ENCODE measurements at regions of chr12 and their contacts with region 1.

Region 1: DNA sequence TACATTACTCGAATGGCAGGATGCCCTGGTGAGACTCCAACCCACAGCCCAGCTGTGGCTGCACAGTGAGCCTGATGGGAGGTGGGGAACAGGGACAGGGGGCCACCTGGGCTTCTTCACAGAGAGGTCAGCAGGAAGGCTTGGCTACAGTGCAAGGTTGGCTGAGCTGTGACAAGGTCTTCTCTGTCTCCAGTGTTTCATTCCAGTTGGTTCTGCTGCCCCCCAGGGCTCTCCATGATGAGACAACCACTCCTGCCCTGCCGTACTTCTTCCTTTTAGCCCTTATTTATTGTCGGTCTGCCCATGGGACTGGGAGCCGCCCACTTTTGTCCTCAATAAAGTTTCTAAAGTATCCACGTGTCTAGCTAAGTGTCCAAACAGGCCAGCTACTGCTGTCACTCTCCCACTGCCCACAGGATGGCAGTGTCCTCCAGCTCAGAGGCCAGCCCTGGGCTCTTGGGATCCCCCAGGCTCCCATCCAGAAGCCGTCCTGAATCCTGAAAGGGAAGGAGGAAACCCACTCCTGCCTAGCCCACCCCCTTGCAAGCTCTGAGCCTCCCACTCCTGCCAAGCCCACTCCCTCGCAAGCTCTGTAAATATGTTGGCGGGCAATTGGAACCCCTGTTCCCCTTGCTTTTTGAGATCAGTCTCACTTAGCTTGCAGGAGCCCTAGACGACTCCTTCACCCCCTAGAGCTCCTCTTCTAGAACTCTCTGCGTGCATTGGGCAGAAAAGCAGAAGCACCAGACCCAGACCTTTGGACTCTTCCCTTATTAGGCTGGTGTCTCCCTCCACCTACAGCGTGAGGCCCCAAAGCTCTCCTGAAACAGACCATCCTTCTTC is 5.4 kb downstream of the C1QL4 start:
- DNase-seq: no peak
- H3K4me3 Mint-ChIP-seq: no peak overlapping the region
- H3K27ac Mint-ChIP-seq: no peak overlapping the region
- H3K4me1 Mint-ChIP-seq: peaks cover 4% of the 10 kb centered on the region
- H3K27me3 Mint-ChIP-seq: peaks cover 32% of the 10 kb centered on the region

Region 2: DNA sequence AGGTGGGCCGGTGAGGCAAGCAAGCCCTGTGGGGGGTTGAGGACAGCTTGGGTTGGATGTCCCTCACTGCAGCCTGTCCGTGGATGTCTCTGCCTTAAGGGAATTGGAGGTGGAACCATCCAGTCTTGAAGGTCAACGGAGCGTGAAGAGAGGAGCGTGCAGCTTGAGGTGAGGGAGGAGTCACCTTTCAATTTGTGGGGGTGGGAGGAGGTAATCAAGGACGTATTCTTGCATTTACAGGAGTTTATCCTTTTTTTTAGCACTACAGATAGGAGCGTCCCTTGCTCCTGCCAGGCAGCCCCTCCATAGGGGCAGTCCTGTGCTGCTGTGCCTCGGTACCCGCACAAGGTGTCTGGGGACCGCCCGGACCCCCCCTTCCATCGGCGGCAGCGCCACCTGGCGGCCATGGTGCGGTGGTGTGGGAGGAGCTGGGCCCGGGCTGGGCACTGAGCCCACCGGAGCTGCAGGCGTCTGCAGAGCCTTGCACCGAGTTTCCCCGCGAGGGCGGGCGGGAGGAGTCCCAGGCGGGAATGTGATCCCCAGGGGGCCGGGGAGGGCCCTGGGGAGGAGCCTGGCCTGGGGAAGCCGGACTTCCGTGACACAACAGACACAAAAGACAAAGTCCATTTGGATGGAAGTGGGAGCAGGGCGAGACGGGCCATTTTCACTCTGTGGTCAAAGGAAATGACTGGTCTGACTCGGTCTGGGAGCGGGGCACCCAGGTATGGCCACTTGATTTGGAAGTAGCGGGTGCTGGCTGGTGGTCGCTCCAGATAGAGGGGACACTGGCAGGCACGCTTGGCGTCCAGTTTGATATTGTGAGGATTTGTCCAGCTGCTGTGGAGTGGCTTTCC is 16.0 kb after region 1 on chr12:
- intact Hi-C with region 1: loop called (anchors 2 kb)
- DNase-seq: peak; percentile 72
- H3K4me3 Mint-ChIP-seq: peak overlapping the region; percentile 67
- H3K27ac Mint-ChIP-seq: no peak overlapping the region
- H3K4me1 Mint-ChIP-seq: peaks cover 18% of the 10 kb centered on the region
- H3K27me3 Mint-ChIP-seq: peaks cover 63% of the 10 kb centered on the region

Region 3: GRCh38 chr12:49400304-49400703 is 68.7 kb after region 1 on chr12:
- intact Hi-C with region 1: no loop called
- DNase-seq: no peak
- H3K4me3 Mint-ChIP-seq: no peak overlapping the region
- H3K27ac Mint-ChIP-seq: no peak overlapping the region
- H3K4me1 Mint-ChIP-seq: peaks cover 13% of the 10 kb centered on the region
- H3K27me3 Mint-ChIP-seq: no peaks in the 10 kb centered on the region